ENCODE measurements at regions of chr5 and their contacts with region 1.

Region 1: GRCh38 chr5:57173185-57174127 is at the start of gene GPBP1:
- DNase-seq: peak; percentile 98
- ATAC-seq: peak; percentile 73
- H3K4me3 Mint-ChIP-seq: peak within 1 kb of the TSS; percentile 95
- H3K27ac Mint-ChIP-seq: peak within 1 kb of the TSS; percentile 97
- H3K4me1 Mint-ChIP-seq: peaks cover 40% of the 10 kb centered on the region
- H3K27me3 Mint-ChIP-seq: no peaks in the 10 kb centered on the region
- CTCF ChIP-seq: no peak
- total RNA-seq, gene GPBP1: 130 and 142 TPM in 2 replicates

Region 2: DNA sequence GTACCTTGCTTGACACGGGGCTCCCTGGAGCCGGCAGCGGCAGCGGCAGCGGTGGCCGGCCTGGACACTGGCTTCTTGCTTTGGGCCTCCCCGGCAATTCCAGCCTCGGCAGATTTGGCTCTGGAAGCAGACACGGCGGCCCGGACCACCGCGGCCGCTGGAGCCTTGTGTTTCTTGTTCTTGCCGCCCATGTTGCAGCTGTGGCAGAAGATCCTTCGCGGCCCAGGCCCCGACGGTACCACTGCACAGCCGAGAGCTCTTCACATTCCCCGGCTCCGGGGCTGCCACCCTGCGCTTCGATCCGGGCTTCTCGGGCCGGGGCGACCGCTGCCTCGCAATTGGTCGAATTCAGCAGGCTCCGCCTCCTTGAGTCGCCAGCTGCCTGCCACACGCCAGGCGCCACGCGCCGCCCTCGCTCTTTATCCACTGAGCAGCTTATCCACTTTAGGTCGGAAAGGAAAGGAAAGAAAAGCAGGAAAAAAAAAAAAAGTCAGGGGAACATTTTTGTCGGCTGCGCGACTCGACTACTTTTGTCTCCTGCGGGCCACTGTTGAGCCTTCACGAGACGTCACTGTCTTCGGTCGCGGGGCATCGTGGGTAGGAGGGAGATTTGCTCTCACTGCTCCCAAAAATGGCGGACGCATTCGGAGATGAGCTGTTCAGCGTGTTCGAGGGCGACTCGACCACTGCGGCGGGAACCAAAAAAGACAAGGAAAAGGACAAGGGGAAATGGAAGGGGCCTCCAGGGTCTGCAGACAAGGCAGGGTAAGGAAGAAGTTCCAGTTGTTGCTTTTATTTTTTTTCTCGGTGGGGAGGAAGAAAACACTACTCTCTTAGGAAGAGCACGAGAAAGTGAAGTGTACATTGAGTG is 1865.8 kb before region 1 on chr5 and contains the starts of genes DHX29 and MTREX:
- CTCF ChIA-PET with region 1: no interaction called
- POLR2A ChIA-PET with region 1: no interaction called
- intact Hi-C with region 1: loop called (anchors 5 kb)
- DNase-seq: peak; percentile 82
- ATAC-seq: peak; percentile 92
- H3K4me3 Mint-ChIP-seq: no peak within 1 kb of the TSS
- H3K27ac Mint-ChIP-seq: no peak within 1 kb of the TSS
- H3K4me1 Mint-ChIP-seq: peaks cover 31% of the 10 kb centered on the region
- H3K27me3 Mint-ChIP-seq: no peaks in the 10 kb centered on the region
- CTCF ChIP-seq: no peak
- total RNA-seq, gene DHX29: 17.4 TPM in 2 replicates
- total RNA-seq, gene MTREX: 98.8 and 106 TPM in 2 replicates

Region 3: GRCh38 chr5:56415356-56415765 is 758.1 kb before region 1 on chr5:
- CTCF ChIA-PET with region 1: no interaction called
- POLR2A ChIA-PET with region 1: interaction called, 4 read pairs
- intact Hi-C with region 1: loop called (anchors 1 kb)
- DNase-seq: peak; percentile 48
- ATAC-seq: peak; percentile 71
- H3K4me3 Mint-ChIP-seq: peak overlapping the region; percentile 78
- H3K27ac Mint-ChIP-seq: peak overlapping the region; percentile 99
- H3K4me1 Mint-ChIP-seq: peaks cover 82% of the 10 kb centered on the region
- H3K27me3 Mint-ChIP-seq: no peaks in the 10 kb centered on the region
- CTCF ChIP-seq: no peak

Region 4: DNA sequence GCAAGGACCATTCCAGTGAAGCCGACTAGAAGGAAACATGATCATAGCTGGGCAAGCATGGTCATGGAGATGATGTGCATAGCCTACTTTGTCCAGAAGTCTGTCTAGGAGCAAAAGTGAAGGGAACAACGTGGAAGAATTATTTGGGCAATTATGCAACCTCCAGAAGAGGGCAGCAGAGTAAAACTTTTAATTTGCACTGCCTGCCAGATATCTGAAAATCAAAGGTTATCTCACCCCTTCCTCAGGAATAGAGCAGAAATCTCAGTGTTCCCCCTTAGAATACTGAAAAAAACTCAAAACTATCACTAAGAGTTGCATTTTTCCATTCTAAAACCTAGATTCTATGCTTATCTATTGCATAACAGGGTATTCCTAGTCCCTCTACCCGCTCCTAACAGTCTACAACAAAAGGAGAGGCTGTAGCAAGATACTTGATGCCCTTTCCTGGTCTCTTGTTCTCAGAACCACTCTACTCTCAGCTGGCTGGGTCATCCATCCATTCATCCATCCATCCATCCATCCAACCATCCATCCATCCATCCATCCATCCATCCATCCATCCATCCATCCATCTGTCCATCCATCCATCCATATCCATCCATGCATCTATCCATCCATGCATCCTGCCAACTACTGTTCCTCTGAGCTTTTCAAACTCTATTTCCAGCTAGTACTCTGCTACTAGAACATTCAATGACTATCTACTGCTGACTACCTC is 272.4 kb before region 1 on chr5:
- CTCF ChIA-PET with region 1: interaction called, 3 read pairs
- POLR2A ChIA-PET with region 1: interaction called, 6 read pairs
- intact Hi-C with region 1: loop called (anchors 2 kb)
- DNase-seq: no peak
- ATAC-seq: peak; percentile 68
- H3K4me3 Mint-ChIP-seq: no peak overlapping the region
- H3K27ac Mint-ChIP-seq: no peak overlapping the region
- H3K4me1 Mint-ChIP-seq: no peaks in the 10 kb centered on the region
- H3K27me3 Mint-ChIP-seq: no peaks in the 10 kb centered on the region
- CTCF ChIP-seq: peak; percentile 10

Region 5: DNA sequence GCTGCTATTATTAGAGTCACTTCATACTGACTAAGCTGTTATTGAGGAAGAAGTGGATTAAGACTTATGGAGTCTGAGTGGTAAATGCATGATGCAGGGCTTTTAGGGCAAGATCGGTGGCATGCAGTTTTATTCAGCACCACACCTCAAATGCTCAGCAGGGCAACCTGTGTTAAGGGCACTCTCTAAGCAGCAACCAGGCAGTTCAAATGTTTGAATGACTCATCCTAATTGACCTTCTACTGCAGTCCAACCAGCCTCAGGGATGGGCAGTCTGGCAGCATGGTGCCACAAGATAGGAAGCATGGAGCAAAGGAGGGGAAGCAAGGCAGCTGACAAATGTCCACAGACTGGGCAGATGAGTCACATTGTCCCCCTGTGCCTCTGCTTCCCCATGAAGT is 141.3 kb before region 1 on chr5:
- CTCF ChIA-PET with region 1: no interaction called
- POLR2A ChIA-PET with region 1: interaction called, 3 read pairs
- intact Hi-C with region 1: loop called (anchors 2 kb)
- DNase-seq: no peak
- ATAC-seq: no peak
- H3K4me3 Mint-ChIP-seq: no peak overlapping the region
- H3K27ac Mint-ChIP-seq: no peak overlapping the region
- H3K4me1 Mint-ChIP-seq: peaks cover 35% of the 10 kb centered on the region
- H3K27me3 Mint-ChIP-seq: no peaks in the 10 kb centered on the region
- CTCF ChIP-seq: no peak

Region 6: DNA sequence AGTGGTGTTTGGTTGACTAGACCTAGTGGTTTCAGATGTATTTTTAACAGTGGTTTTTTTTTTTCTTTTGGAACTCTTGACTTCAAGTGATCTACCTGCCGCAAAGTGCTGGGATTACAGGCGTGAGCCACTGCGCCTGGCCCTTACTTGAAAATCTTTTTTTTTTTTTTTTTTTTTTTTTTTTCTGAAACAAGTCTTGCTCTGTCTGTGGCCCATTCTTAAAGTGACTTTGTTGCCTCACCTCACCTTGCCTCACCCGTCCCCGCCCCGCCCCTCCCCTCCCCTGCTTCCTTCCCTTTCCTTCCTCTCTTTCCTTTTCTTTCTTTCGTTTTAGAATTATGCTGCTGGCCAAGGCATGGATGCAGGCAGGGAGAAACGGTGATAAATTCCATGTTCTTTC is 26.4 kb after region 1 on chr5:
- CTCF ChIA-PET with region 1: no interaction called
- POLR2A ChIA-PET with region 1: interaction called, 13 read pairs
- intact Hi-C with region 1: loop called (anchors 5 kb)
- DNase-seq: no peak
- ATAC-seq: peak; percentile 28
- H3K4me3 Mint-ChIP-seq: peak overlapping the region; percentile 48
- H3K27ac Mint-ChIP-seq: peak overlapping the region; percentile 5
- H3K4me1 Mint-ChIP-seq: peaks cover 64% of the 10 kb centered on the region
- H3K27me3 Mint-ChIP-seq: no peaks in the 10 kb centered on the region
- CTCF ChIP-seq: no peak

Region 7: DNA sequence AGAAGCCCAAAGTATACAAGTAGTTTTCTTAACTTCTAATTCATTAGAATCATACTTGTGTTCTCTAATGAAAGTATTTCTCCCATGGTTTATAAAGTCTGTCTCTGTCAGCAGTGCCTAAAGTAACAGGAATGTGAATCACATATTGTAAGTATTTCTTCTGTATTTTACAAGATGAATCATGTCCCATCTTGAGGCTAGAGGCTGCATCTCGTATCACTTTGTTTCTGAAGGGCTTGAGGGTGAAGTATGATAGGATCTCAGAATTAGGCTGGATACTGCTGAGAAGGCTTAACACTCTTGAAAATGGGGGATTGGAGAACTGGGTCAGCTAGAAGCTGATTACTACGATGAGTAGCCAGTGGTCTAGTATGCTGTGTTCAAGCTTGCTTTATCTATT is 551.4 kb after region 1 on chr5:
- CTCF ChIA-PET with region 1: no interaction called
- POLR2A ChIA-PET with region 1: no interaction called
- intact Hi-C with region 1: no loop called
- DNase-seq: no peak
- ATAC-seq: no peak
- H3K4me3 Mint-ChIP-seq: no peak overlapping the region
- H3K27ac Mint-ChIP-seq: no peak overlapping the region
- H3K4me1 Mint-ChIP-seq: no peaks in the 10 kb centered on the region
- H3K27me3 Mint-ChIP-seq: no peaks in the 10 kb centered on the region
- CTCF ChIP-seq: no peak

Region 8: DNA sequence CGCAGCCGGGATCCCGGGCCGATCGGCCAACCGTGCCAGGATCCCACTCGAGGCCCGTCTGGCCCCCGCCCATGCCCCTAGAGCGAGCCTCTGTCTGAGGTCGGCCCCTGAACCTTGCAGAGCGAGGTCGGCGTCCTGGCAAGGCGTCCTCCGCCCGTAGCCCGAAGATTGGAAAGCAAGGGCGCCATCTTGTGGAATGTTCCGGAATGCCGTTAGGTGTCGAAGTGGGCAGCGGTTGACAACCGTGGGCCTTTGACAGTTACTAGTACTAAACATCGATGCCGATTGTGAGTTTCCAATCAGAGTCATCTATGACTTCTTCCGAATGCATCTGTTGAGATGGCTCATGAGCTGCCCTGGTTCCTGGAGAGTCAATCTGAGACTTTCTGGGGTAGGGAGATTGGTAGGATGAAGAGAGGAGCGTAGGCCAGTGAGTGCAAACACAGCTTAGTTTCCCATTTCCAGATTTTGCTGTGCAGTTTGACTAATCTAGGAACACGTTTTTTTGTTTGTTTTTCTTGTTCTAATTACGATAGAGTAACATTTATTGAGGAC is 1287.4 kb after region 1 on chr5:
- CTCF ChIA-PET with region 1: no interaction called
- POLR2A ChIA-PET with region 1: no interaction called
- intact Hi-C with region 1: loop called (anchors 1 kb)
- DNase-seq: peak; percentile 86
- ATAC-seq: peak; percentile 65
- H3K4me3 Mint-ChIP-seq: peak overlapping the region; percentile 89
- H3K27ac Mint-ChIP-seq: peak overlapping the region; percentile 83
- H3K4me1 Mint-ChIP-seq: peaks cover 16% of the 10 kb centered on the region
- H3K27me3 Mint-ChIP-seq: no peaks in the 10 kb centered on the region
- CTCF ChIP-seq: no peak